ENCODE measurements at regions of chr3 and their contacts with region 1.

Region 1: GRCh38 chr3:155015776-155016436 is 64.2 kb upstream of the MME start:
- DNase-seq: no peak
- H3K4me3 ChIP-seq: no peak overlapping the region
- H3K27ac ChIP-seq: no peak overlapping the region
- H3K4me1 ChIP-seq: no peaks in the 10 kb centered on the region
- H3K27me3 ChIP-seq: no peaks in the 10 kb centered on the region
- CTCF ChIP-seq: no peak
- POLR2A ChIP-seq: no peak

Region 2: DNA sequence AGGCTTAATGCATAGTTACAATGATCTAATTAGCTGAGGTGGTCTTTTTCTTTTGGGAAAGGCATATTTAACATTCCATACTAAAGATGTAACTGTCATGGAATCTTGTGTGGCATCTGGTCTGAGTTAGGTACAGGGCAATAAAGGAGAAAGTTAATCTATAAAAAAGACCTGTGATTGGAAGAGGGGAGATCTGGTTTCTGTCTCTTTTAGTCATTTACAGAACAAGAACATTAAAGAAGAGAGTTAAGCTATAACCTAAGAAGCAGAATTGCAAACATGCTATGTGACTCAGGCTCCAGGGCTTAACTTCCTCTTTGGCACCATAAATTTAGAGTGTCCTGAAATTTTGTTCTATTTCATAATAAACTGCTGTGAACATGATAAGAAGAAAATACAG is 17.0 kb after region 1 on chr3:
- intact Hi-C with region 1: loop called (anchors 1 kb)
- DNase-seq: no peak
- H3K4me3 ChIP-seq: no peak overlapping the region
- H3K27ac ChIP-seq: no peak overlapping the region
- H3K4me1 ChIP-seq: no peaks in the 10 kb centered on the region
- H3K27me3 ChIP-seq: no peaks in the 10 kb centered on the region
- CTCF ChIP-seq: no peak
- POLR2A ChIP-seq: no peak

Measured in vagina (tissue), 2 donors.